Spleen (tissue), 13 donors: ENCODE measurements at regions of chr5 and their contacts with region 1.

Region 1: GRCh38 chr5:34474573-34475021 is 181.5 kb upstream of the RAI14 start:
- DNase-seq: no peak
- H3K4me3 ChIP-seq: no peak overlapping the region
- H3K27ac ChIP-seq: no peak overlapping the region
- H3K4me1 ChIP-seq: peaks cover 0 to 6% (median 0%) of the 10 kb centered on the region in 6 donors
- H3K27me3 ChIP-seq: peaks cover 0 to 15% (median 0%) of the 10 kb centered on the region in 7 donors
- CTCF ChIP-seq: peak; percentile 52 to 92 (median 84)
- POLR2A ChIP-seq: no peak

Region 2: GRCh38 chr5:34626036-34626754 is 151.6 kb after region 1 on chr5:
- intact Hi-C with region 1: no loop called
- DNase-seq: no peak
- H3K4me3 ChIP-seq: no peak overlapping the region
- H3K27ac ChIP-seq: no peak overlapping the region
- H3K4me1 ChIP-seq: peaks cover 0 to 11% (median 0%) of the 10 kb centered on the region in 6 donors
- H3K27me3 ChIP-seq: no peaks in the 10 kb centered on the region
- CTCF ChIP-seq: no peak
- POLR2A ChIP-seq: no peak

Region 3: GRCh38 chr5:35003018-35003957 is 528.7 kb after region 1 on chr5:
- intact Hi-C with region 1: loop called (anchors 5 kb)
- DNase-seq: no peak
- H3K4me3 ChIP-seq: no peak overlapping the region
- H3K27ac ChIP-seq: no peak overlapping the region
- H3K4me1 ChIP-seq: peaks cover 0 to 6% (median 0%) of the 10 kb centered on the region in 6 donors
- H3K27me3 ChIP-seq: peaks cover 0 to 31% (median 0%) of the 10 kb centered on the region in 7 donors
- CTCF ChIP-seq: peak; percentile 45 to 77 (median 67)
- POLR2A ChIP-seq: no peak